ENCODE measurements at regions of chr5 and their contacts with region 1.

Region 1: DNA sequence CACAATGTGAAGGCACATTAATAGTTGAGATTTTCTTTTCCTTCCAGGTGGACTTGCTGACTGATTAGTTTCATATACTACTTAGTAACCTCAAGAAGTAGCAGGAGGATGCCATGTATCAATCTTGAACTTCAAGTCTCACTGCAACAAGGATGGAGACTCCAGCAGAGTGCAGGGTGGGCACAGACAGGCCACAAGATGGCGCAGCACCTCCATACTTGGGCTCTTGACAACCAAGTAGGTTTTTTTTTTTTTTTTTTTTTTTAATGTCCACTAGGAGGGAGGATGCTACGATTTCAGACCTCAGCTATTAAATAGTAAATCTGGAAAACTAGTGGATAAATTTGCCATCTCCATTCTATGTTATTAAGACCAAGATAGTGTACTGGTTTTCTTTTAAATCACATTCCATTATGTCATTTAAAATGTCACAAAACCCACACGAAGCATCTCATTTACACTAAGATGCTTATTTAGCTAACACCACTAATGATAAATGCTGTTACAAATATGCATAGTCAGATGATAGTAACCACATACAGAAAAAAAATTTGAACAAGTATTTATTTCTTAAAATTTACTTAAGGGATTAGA is 58.6 kb downstream of the IL6ST start:
- DNase-seq: peak; percentile 82
- H3K4me3 Mint-ChIP-seq: no peak overlapping the region
- H3K27ac Mint-ChIP-seq: no peak overlapping the region
- H3K4me1 Mint-ChIP-seq: peaks cover 6% of the 10 kb centered on the region
- H3K27me3 Mint-ChIP-seq: no peaks in the 10 kb centered on the region

Region 2: DNA sequence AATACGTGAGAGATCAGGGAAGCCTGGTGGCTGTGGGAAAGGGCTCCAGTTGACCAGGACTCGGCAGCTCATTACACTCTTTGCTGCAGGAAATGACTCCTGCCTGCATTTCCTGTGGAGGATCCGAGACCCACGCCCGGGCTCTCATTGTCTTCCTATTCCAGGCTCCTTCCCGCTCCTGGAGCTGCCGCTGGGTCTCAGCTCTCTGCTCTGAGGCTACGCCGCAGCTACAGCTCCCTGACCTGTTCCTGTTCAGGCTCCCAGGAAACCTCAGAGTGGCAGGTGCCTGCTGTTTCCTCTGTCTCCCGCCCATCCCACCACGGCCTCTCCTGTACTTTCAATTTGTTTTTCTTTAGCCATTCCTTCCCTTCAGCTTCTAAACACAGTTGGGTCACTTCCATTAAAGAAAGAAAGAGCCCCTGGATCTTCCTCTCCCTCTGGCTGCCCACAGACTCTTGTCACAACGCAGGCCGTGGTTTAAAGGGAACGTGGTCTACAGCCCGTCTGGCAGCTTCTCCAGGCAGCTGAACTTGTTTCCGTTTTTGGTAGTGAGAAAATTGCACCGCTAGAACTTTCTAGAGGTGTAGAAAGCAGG is 12.9 kb before region 1 on chr5:
- CTCF ChIA-PET with region 1: interaction called, 7 read pairs
- POLR2A ChIA-PET with region 1: interaction called, 15 read pairs
- DNase-seq: no peak
- H3K4me3 Mint-ChIP-seq: peak overlapping the region; percentile 81
- H3K27ac Mint-ChIP-seq: peak overlapping the region; percentile 65
- H3K4me1 Mint-ChIP-seq: peaks cover 31% of the 10 kb centered on the region
- H3K27me3 Mint-ChIP-seq: no peaks in the 10 kb centered on the region

Region 3: GRCh38 chr5:55982957-55983381 is 46.8 kb after region 1 on chr5:
- CTCF ChIA-PET with region 1: interaction called, 23 read pairs
- POLR2A ChIA-PET with region 1: interaction called, 5 read pairs
- DNase-seq: no peak
- H3K4me3 Mint-ChIP-seq: no peak overlapping the region
- H3K27ac Mint-ChIP-seq: no peak overlapping the region
- H3K4me1 Mint-ChIP-seq: peaks cover 54% of the 10 kb centered on the region
- H3K27me3 Mint-ChIP-seq: no peaks in the 10 kb centered on the region

Region 4: DNA sequence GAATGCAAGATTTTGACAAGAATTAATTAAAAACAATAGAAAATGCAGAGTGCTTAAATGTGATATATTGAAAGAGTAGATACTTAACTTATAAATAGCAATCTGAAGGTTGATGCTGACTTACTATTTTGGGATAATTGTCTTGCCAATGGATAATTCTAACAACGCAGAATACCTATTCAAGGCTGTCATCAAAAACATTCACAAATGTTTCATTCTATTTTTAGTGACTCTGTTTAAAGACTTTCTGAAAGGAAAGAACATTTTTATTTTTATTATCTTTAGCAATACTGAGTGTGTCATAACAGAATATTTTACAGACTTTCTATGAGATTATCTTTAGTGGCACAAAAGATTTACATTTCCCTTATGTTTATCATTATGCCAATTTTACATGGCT is 258.8 kb after region 1 on chr5:
- CTCF ChIA-PET with region 1: interaction called, 96 read pairs
- POLR2A ChIA-PET with region 1: interaction called, 3 read pairs
- DNase-seq: no peak
- H3K4me3 Mint-ChIP-seq: no peak overlapping the region
- H3K27ac Mint-ChIP-seq: no peak overlapping the region
- H3K4me1 Mint-ChIP-seq: peaks cover 2% of the 10 kb centered on the region
- H3K27me3 Mint-ChIP-seq: no peaks in the 10 kb centered on the region

Region 5: GRCh38 chr5:56270568-56271392 is 334.6 kb after region 1 on chr5:
- CTCF ChIA-PET with region 1: interaction called, 27 read pairs
- POLR2A ChIA-PET with region 1: no interaction called
- DNase-seq: peak; percentile 82
- H3K4me3 Mint-ChIP-seq: no peak overlapping the region
- H3K27ac Mint-ChIP-seq: peak overlapping the region; percentile 0
- H3K4me1 Mint-ChIP-seq: peaks cover 17% of the 10 kb centered on the region
- H3K27me3 Mint-ChIP-seq: peaks cover 6% of the 10 kb centered on the region